Activated CD4-positive, alpha-beta T cell treated with anti-CD3 and anti-CD28 coated beads, Interleukin-2, amount 10 ng/mL, durations not matched to agents 7 days and 5 days (primary cell): ENCODE measurements at regions of chr2 and their contacts with region 1.

Region 1: GRCh38 chr2:74250189-74250631 is 51.8 kb downstream of the MTHFD2 start:
- DNase-seq: peak; percentile 63
- H3K4me3 Mint-ChIP-seq: no peak overlapping the region
- H3K27ac Mint-ChIP-seq: peak overlapping the region; percentile 39
- H3K4me1 Mint-ChIP-seq: peaks cover 4% of the 10 kb centered on the region
- H3K27me3 Mint-ChIP-seq: no peaks in the 10 kb centered on the region

Region 2: GRCh38 chr2:74037379-74037860 is 212.8 kb before region 1 on chr2:
- CTCF ChIA-PET with region 1: no interaction called
- POLR2A ChIA-PET with region 1: no interaction called
- DNase-seq: no peak
- H3K4me3 Mint-ChIP-seq: no peak overlapping the region
- H3K27ac Mint-ChIP-seq: no peak overlapping the region
- H3K4me1 Mint-ChIP-seq: peaks cover 63% of the 10 kb centered on the region
- H3K27me3 Mint-ChIP-seq: no peaks in the 10 kb centered on the region

Region 3: DNA sequence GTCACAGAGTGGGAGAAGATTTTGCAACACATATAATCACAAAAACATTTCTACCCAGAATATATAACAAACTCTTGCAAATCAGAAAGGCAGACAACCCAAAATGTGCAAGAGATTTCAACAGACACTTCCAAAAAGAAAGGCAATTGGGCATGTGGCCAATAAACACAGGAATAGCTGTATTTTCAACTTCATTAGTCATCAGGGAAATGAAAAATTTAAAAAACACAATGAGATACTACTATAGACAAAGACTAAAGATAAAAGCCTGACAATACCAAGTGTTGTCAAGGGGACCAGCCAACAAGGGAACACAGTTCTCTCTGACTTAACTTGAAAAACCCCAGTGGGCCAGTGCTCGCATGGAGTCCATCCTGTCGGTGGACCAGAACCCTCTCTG is 11.3 kb before region 1 on chr2:
- CTCF ChIA-PET with region 1: interaction called, 10 read pairs
- POLR2A ChIA-PET with region 1: no interaction called
- DNase-seq: no peak
- H3K4me3 Mint-ChIP-seq: no peak overlapping the region
- H3K27ac Mint-ChIP-seq: no peak overlapping the region
- H3K4me1 Mint-ChIP-seq: no peaks in the 10 kb centered on the region
- H3K27me3 Mint-ChIP-seq: no peaks in the 10 kb centered on the region

Region 4: DNA sequence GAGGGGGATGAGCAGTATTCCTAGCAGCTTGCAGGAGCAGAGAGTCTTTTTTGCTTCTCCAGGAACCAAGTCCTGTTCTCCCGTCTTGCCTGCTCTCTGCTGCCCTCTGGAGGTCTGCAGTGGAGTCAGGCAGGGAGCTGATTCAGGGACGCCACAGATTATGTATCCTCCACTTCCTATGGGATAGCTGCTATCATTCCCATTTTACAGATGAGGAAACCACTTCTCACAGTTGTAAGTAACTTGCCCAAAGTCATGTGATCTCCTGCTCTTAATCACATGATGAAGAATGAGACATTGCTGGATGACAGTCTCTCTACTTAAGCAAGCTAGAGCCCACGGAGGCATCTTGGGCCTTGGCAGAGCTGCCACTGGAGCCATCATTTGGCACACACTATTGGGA is 84.7 kb after region 1 on chr2:
- CTCF ChIA-PET with region 1: interaction called, 14 read pairs
- POLR2A ChIA-PET with region 1: no interaction called
- DNase-seq: peak; percentile 80
- H3K4me3 Mint-ChIP-seq: no peak overlapping the region
- H3K27ac Mint-ChIP-seq: no peak overlapping the region
- H3K4me1 Mint-ChIP-seq: peaks cover 6% of the 10 kb centered on the region
- H3K27me3 Mint-ChIP-seq: no peaks in the 10 kb centered on the region